Activated T-helper 2 cell treated with anti-CD3 and anti-CD28 coated beads, Interferon-gamma antibody, Interleukin-2, Interleukin-4, amounts not matched to agents 10 μg/mL and 5 μg/mL and 100 μg/mL, durations not matched to agents 14 hours and 24 hours and 36 hours (primary cell): ENCODE measurements at regions of chr6 and their contacts with region 1.

Region 1: DNA sequence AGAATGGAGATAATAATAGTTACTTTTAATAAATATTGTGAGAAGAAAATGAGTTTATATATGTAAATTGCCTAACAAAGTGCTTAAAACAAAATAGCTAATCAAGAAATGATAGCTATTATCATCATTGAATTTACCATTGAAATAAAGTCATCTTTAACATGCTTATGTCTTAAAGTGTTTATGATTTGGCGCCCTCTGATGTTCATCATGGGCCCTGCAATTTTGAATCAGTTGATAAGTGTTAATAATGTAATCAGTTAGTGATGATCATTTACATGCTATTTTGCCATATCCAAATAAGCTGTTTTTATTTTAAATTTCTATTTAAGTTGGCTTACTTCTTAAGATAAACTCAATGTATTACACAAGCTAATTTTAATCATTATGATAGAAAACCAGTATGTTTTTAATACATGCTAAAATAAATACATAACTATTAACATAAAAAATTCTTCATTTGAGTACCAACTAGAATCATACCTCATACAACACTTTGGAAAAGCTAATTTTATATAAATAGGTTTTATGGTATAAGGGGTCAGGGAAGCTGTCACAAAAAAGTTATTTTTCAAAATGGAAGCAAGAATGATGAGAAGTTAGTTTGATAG is 39.2 kb upstream of the TPD52L1 start:
- DNase-seq: peak; percentile 14
- H3K4me3 Mint-ChIP-seq: no peak overlapping the region
- H3K27ac Mint-ChIP-seq: no peak overlapping the region
- H3K4me1 Mint-ChIP-seq: no peaks in the 10 kb centered on the region
- H3K27me3 Mint-ChIP-seq: no peaks in the 10 kb centered on the region

Region 2: DNA sequence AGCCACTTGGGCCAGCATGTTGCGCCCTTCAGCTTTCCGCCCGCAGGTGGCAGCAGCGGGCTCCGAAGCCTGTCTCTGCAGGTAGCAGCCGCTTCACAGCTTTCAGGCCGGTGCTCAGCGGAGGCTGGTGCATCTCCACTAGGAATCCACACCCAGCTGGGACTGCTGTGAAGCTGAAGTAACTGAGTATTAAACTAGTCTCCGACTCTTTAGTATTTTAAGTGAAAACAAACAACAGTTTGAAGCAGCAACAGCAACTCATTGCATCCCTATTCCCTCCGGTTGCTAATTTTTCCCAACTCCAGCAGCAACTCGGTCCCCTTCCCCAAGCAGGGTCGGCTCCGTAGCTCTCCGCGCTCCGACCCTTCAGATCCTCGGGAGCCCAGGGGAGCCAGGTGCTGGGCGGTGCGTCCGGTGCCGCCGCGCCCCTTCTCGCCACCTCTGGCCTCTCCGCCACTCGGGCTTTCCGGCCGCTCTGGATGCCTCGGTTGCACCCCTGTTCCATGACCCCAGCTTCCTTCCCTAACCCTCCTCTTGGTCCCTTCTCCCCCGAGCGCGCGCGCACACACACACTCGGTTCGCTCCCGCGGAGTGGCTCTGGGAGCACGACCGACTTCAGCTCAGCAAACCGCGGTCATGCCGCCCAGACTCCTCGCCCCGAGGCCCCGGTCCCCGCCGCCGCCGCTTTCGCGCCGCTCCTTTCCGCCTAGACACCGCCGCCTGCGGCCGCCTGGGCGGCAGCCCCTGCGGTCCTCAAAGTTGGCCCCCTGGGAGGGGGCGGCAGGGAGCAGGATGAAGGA is 1311.5 kb before region 1 on chr6:
- intact Hi-C with region 1: loop called (anchors 5 kb)
- DNase-seq: peak; percentile 52
- H3K4me3 Mint-ChIP-seq: peak overlapping the region; percentile 58
- H3K27ac Mint-ChIP-seq: no peak overlapping the region
- H3K4me1 Mint-ChIP-seq: peaks cover 8% of the 10 kb centered on the region
- H3K27me3 Mint-ChIP-seq: peaks cover 32% of the 10 kb centered on the region

Region 3: DNA sequence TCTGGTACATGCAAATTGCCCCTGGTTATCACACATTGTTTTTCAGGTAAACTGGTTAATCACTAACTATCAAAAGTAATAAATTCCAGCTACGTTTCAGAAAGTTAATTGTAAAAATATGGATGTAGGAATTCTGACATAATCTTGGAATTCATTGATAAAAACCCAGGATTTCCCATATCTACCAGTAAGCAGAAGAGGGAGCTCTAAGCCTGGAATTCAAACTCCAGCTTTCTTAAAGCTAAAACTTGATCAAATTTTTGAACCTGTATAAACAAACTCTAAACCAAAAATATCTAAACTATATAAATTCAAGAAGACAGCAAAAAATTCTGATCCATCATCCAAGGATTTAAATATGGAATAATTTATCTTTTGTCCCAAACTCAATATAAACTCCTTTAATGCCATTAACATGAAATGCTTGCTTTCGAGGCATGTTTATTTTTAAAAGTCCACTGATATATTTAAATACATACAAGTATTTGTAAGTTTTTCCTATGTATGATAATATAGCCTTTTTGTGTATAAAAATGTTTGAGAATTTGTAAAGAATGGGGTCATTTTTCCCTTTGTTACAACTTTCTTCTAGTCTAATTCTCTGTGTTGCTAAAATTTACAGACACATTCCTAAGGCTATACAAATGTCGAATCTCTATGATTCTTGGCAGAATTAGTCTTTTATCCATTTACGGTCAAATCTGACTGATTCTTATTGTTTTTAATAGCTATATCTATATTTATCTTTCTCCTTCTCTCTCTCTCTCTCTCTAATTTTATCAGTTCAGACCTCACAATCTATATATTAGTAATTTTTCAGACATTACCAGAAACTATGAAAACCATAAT is 243.5 kb before region 1 on chr6:
- intact Hi-C with region 1: loop called (anchors 1 kb)
- DNase-seq: no peak
- H3K4me3 Mint-ChIP-seq: no peak overlapping the region
- H3K27ac Mint-ChIP-seq: no peak overlapping the region
- H3K4me1 Mint-ChIP-seq: no peaks in the 10 kb centered on the region
- H3K27me3 Mint-ChIP-seq: no peaks in the 10 kb centered on the region

Region 4: DNA sequence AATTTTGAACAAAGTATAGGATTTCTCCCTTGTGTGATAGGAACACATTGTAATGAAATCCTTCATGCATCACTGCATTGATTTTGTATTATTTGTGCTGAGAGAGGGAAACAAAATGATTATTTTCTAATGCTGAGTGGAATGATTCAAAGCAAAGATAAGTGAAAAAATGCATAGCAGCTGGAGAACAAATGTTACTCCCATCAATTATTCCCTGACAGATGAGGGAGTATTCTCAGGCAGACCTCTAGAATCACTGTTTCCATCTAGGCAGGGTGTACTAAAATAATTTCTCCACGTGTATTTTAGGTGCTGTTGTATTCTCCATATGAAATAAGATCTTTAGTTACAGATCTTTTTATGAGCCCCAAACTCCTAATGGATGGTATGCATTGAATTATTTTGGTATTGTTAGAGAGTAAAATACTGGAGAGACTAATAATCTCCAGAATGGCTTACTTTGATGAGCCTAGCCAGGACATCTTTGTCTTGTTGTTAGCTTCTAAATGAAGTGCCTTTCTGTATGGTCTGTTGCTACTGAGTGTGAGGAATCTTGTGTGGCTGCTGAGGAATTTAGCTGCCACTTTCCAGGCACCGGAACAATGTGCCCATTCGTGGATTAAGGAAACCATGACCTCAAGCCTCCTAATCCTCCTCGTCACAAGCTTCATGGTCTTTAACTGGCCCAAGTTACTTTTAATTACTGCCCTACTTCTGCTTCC is 112.5 kb before region 1 on chr6:
- intact Hi-C with region 1: no loop called
- DNase-seq: no peak
- H3K4me3 Mint-ChIP-seq: no peak overlapping the region
- H3K27ac Mint-ChIP-seq: no peak overlapping the region
- H3K4me1 Mint-ChIP-seq: no peaks in the 10 kb centered on the region
- H3K27me3 Mint-ChIP-seq: no peaks in the 10 kb centered on the region